Common myeloid progenitor, CD34-positive (primary cell): ENCODE measurements at regions of chrX and their contacts with region 1.

Region 1: DNA sequence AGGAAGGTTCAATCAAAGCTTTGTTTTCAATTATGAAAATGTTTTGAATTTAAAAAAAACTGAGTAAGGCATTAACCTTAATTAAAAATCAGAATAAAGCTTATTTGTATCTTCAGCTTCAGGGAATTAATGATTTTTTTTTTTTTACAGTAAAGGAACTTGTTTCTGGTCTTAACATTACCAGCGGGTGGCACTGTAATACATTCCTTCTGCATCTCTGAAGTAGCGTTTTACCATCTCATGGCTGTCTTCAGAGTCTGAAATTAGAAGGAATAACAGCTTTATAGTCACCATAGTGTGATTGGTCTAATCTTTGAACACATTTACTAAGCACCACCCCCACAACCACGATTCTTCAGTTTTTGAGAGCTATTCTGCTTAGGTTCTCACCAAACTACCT is 102.6 kb downstream of the IL1RAPL2 start:
- DNase-seq: peak; percentile 27 to 58 (median 57)
- H3K4me3 ChIP-seq: no peak overlapping the region
- H3K27ac ChIP-seq: no peak overlapping the region
- H3K4me1 ChIP-seq: no peaks in the 10 kb centered on the region
- H3K27me3 ChIP-seq: no peaks in the 10 kb centered on the region

Region 2: GRCh38 chrX:104922206-104922621 is 253.7 kb after region 1 on chrX:
- CTCF ChIA-PET with region 1: interaction called, 11 read pairs
- POLR2A ChIA-PET with region 1: no interaction called
- DNase-seq: peak; percentile 70 to 90 (median 86)
- H3K4me3 ChIP-seq: no peak overlapping the region
- H3K27ac ChIP-seq: no peak overlapping the region
- H3K4me1 ChIP-seq: no peaks in the 10 kb centered on the region
- H3K27me3 ChIP-seq: peaks cover 0 to 2% (median 0%) of the 10 kb centered on the region in 5 experiments